Cardiac septum (tissue), 1 donor: ENCODE measurements at regions of chr1 and their contacts with region 1.

Region 1: DNA sequence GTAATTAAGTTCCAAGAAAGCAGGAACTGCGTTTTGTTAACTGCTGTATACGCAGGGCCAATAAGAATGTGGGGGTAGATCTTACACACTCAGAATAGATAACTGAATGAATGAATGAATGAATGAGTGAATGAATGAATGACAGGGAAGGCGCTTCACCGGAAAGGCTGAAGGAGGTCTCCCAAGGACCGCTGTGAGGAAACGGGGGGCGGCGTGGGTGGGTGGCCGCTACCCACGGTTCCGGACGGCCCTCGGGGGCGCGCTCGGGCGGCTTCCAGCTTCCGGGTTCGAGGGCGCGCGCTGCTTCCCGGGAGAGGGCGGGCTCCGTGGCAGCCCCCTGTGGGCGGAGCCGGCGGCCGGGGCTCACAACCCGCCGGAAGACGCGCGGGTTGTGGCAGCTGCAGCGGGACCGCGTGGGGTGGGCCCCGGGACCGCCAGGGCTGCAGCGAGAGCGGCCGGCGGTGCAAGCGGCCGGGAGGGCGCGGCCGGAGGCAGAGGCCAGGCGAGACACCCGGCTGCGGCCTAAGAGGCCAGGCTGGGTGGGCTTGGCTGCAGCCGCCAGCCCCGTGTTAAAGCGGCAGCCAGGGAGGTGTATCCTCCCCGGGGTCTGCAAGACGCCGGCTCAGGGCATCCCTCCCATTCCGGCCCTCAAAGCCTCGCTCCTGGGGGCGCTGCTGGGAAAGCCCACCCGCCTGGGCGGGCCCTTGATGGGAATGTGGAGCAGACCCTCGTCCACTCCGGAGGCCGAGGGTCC is at the start of gene ZFP69:
- DNase-seq: peak; percentile 84
- total RNA-seq, gene ZFP69: 2.6 TPM

Region 2: GRCh38 chr1:40143891-40144575 is 333.1 kb before region 1 on chr1:
- intact Hi-C with region 1: no loop called
- DNase-seq: no peak

Region 3: DNA sequence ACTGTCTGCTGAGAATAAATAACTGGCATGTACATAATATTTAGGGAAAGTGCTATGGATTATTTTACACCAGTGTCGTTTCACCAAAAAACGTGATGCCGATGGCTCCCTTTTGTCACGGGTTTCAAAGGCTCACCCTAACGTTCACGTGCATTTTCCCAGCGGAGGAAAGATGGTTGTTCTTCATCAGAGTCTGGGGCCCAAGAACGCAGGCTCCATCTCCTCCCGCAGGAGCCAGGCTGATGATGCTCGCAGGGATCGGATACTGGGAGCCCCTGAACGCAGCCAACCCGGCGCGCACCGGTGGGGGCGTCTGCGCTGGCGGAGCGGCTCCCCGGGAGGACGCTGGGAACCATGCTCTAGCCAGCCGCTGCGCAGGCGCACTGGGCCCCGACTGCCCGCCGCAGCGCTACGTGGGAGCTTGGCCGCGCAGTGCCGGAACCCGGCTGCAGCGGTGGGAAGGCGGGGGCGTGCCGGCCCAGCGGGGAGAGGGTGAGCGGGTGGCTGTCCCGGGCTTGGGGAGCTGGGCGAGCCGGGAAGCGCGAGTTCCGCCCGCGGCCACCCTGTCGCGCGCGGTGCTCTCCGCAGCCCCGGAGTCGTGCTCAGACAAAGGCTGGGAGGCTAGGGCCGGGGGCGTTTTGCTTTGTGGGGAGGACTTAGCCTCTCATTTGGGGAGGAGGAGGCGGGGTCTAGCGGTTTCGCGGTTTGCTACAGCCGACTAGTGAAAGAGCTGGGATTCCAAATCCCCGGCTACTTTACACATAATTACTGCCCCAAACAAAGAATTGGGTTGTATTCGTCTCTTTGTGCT is 27.2 kb before region 1 on chr1 and contains the start of gene ZFP69B:
- intact Hi-C with region 1: loop called (anchors 2 kb)
- DNase-seq: peak; percentile 96
- total RNA-seq, gene ZFP69B: 1.3 TPM

Region 4: GRCh38 chr1:40630488-40631381 is 153.6 kb after region 1 on chr1:
- intact Hi-C with region 1: no loop called
- DNase-seq: peak; percentile 68